Gastrocnemius medialis (tissue), 4 donors: ENCODE measurements at regions of chr11 and their contacts with region 1.

Region 1: GRCh38 chr11:14249121-14249963 is 109.6 kb downstream of the RRAS2 start:
- DNase-seq: no peak
- ATAC-seq: peak; percentile 25 to 46
- H3K4me3 ChIP-seq: no peak overlapping the region
- H3K27ac ChIP-seq: no peak overlapping the region
- H3K4me1 ChIP-seq: no peaks in the 10 kb centered on the region
- H3K27me3 ChIP-seq: peaks cover 0 to 7% (median 0%) of the 10 kb centered on the region in 3 donors
- CTCF ChIP-seq: peak; percentile 67 to 87 (median 78)
- POLR2A ChIP-seq: no peak

Region 2: GRCh38 chr11:13772223-13773046 is 476.9 kb before region 1 on chr11:
- in situ Hi-C with region 1: loop called in 2 of 4 experiments (anchors 10 to 25 kb)
- intact Hi-C with region 1: no loop called
- DNase-seq: no peak
- ATAC-seq: no peak
- H3K4me3 ChIP-seq: no peak overlapping the region
- H3K27ac ChIP-seq: no peak overlapping the region
- H3K4me1 ChIP-seq: no peaks in the 10 kb centered on the region
- H3K27me3 ChIP-seq: no peaks in the 10 kb centered on the region
- CTCF ChIP-seq: peak in 2 of 5 experiments; percentile 9 to 30
- POLR2A ChIP-seq: no peak

Region 3: GRCh38 chr11:13955971-13956421 is 293.3 kb before region 1 on chr11:
- in situ Hi-C with region 1: loop called (anchors 5 to 25 kb)
- intact Hi-C with region 1: loop called (anchors 1 kb)
- DNase-seq: peak; percentile 17 to 33
- ATAC-seq: peak in 1 of 2 donors; percentile 51
- H3K4me3 ChIP-seq: no peak overlapping the region
- H3K27ac ChIP-seq: no peak overlapping the region
- H3K4me1 ChIP-seq: no peaks in the 10 kb centered on the region
- H3K27me3 ChIP-seq: peaks cover 1 to 5% (median 4%) of the 10 kb centered on the region in 3 donors
- CTCF ChIP-seq: peak; percentile 44 to 71 (median 68)
- POLR2A ChIP-seq: no peak